B cell (primary cell): ENCODE measurements at regions of chr11 and their contacts with region 1.

Region 1: DNA sequence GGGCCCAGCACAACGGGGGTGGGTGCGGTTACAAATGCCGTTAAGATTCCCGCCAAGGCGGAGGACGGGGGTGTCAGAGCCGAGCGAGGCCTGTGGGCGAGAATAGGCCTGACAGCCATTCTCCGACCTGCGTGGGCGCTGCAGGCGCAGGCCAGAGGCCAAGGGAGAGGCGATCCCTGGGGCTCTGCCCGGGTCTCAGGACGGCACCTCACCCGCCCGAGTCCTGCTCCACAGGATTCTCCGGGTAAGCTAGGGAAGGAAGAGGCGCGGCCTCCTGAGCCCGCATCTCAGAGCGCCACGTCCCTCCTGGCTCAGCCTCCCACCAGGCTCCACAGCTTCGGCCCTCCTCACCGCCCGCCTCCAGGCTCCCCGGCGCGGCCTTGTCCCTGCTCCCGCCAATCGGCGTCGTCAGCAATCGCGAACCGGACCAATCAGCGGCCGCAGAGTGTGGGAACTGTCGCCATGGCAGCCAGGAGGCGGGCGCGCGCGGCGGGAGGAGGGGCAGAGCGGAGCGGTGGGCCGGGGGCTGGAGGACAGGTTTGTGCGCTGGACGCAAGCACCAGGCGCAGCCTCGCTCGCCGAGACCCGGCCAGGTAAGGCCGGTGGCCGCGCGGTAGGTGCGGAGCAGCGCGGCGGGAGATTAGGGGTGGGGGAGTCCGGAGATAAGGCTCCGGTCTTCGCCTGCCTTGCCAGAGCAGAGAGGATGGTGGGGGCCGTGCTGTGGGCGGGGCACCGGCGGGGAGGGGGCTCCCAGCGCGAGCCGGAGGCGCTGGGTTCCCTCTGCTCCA is at the start of gene NUCB2:
- DNase-seq: peak; percentile 95
- ATAC-seq: peak; percentile 97
- H3K4me3 ChIP-seq: peak within 1 kb of the TSS; percentile 50 to 89 (median 78)
- H3K4me3 Mint-ChIP-seq: peak within 1 kb of the TSS; percentile 95
- H3K27ac ChIP-seq: peak within 1 kb of the TSS; percentile 56 to 64
- H3K27ac Mint-ChIP-seq: peak within 1 kb of the TSS; percentile 89
- H3K4me1 ChIP-seq: peaks cover 8 to 14% of the 10 kb centered on the region in 2 donors
- H3K4me1 Mint-ChIP-seq: peaks cover 20% of the 10 kb centered on the region
- H3K27me3 ChIP-seq: no peaks in the 10 kb centered on the region
- H3K27me3 Mint-ChIP-seq: no peaks in the 10 kb centered on the region
- CTCF ChIP-seq: no peak
- total RNA-seq, gene NUCB2: 6.8 and 10.5 TPM in 2 replicates

Region 2: GRCh38 chr11:16738193-16738946 is 538.1 kb before region 1 on chr11 and contains the start of gene C11orf58:
- CTCF ChIA-PET with region 1: no interaction called
- POLR2A ChIA-PET with region 1: no interaction called
- intact Hi-C with region 1: loop called (anchors 2 kb)
- DNase-seq: peak; percentile 98
- ATAC-seq: peak; percentile 97
- H3K4me3 ChIP-seq: peak within 1 kb of the TSS; percentile 86 to 97 (median 95)
- H3K4me3 Mint-ChIP-seq: peak within 1 kb of the TSS; percentile 73
- H3K27ac ChIP-seq: peak within 1 kb of the TSS; percentile 98 to 99
- H3K27ac Mint-ChIP-seq: peak within 1 kb of the TSS; percentile 66
- H3K4me1 ChIP-seq: peaks cover 25 to 28% of the 10 kb centered on the region in 2 donors
- H3K4me1 Mint-ChIP-seq: peaks cover 20% of the 10 kb centered on the region
- H3K27me3 ChIP-seq: no peaks in the 10 kb centered on the region
- H3K27me3 Mint-ChIP-seq: no peaks in the 10 kb centered on the region
- CTCF ChIP-seq: no peak
- total RNA-seq, gene C11orf58: 125 and 129 TPM in 2 replicates

Region 3: GRCh38 chr11:17207317-17208258 is 68.8 kb before region 1 on chr11 and contains the start of gene PIK3C2A:
- CTCF ChIA-PET with region 1: interaction called, 5 read pairs
- POLR2A ChIA-PET with region 1: no interaction called
- intact Hi-C with region 1: loop called (anchors 1 kb)
- DNase-seq: peak; percentile 95
- ATAC-seq: peak; percentile 96
- H3K4me3 ChIP-seq: peak within 1 kb of the TSS; percentile 82 to 99 (median 96)
- H3K4me3 Mint-ChIP-seq: peak within 1 kb of the TSS; percentile 98
- H3K27ac ChIP-seq: peak within 1 kb of the TSS; percentile 96 to 98
- H3K27ac Mint-ChIP-seq: peak within 1 kb of the TSS; percentile 94
- H3K4me1 ChIP-seq: peaks cover 22 to 29% of the 10 kb centered on the region in 2 donors
- H3K4me1 Mint-ChIP-seq: peaks cover 38% of the 10 kb centered on the region
- H3K27me3 ChIP-seq: no peaks in the 10 kb centered on the region
- H3K27me3 Mint-ChIP-seq: no peaks in the 10 kb centered on the region
- CTCF ChIP-seq: no peak
- total RNA-seq, gene PIK3C2A: 48.8 and 54.9 TPM in 2 replicates

Region 4: GRCh38 chr11:17230867-17231851 is 45.3 kb before region 1 on chr11:
- CTCF ChIA-PET with region 1: interaction called, 5 read pairs
- POLR2A ChIA-PET with region 1: no interaction called
- intact Hi-C with region 1: loop called (anchors 1 kb)
- DNase-seq: peak; percentile 45
- ATAC-seq: peak; percentile 66
- H3K4me3 ChIP-seq: no peak overlapping the region
- H3K4me3 Mint-ChIP-seq: peak overlapping the region; percentile 30
- H3K27ac ChIP-seq: no peak overlapping the region
- H3K27ac Mint-ChIP-seq: no peak overlapping the region
- H3K4me1 ChIP-seq: peaks cover 4 to 17% of the 10 kb centered on the region in 2 donors
- H3K4me1 Mint-ChIP-seq: peaks cover 11% of the 10 kb centered on the region
- H3K27me3 ChIP-seq: no peaks in the 10 kb centered on the region
- H3K27me3 Mint-ChIP-seq: no peaks in the 10 kb centered on the region
- CTCF ChIP-seq: no peak

Region 5: GRCh38 chr11:17260020-17260419 is 16.4 kb before region 1 on chr11:
- CTCF ChIA-PET with region 1: no interaction called
- POLR2A ChIA-PET with region 1: no interaction called
- intact Hi-C with region 1: no loop called
- DNase-seq: no peak
- ATAC-seq: no peak
- H3K4me3 ChIP-seq: no peak overlapping the region
- H3K4me3 Mint-ChIP-seq: no peak overlapping the region
- H3K27ac ChIP-seq: no peak overlapping the region
- H3K27ac Mint-ChIP-seq: no peak overlapping the region
- H3K4me1 ChIP-seq: no peaks in the 10 kb centered on the region
- H3K4me1 Mint-ChIP-seq: no peaks in the 10 kb centered on the region
- H3K27me3 ChIP-seq: peaks cover 0 to 2% (median 0%) of the 10 kb centered on the region in 4 experiments
- H3K27me3 Mint-ChIP-seq: peaks cover 14% of the 10 kb centered on the region
- CTCF ChIP-seq: no peak

Region 6: GRCh38 chr11:17354601-17354991 is 78.2 kb after region 1 on chr11:
- CTCF ChIA-PET with region 1: interaction called, 7 read pairs
- POLR2A ChIA-PET with region 1: no interaction called
- intact Hi-C with region 1: loop called (anchors 2 kb)
- DNase-seq: peak; percentile 80
- ATAC-seq: no peak
- H3K4me3 ChIP-seq: no peak overlapping the region
- H3K4me3 Mint-ChIP-seq: peak overlapping the region; percentile 95
- H3K27ac ChIP-seq: no peak overlapping the region
- H3K27ac Mint-ChIP-seq: no peak overlapping the region
- H3K4me1 ChIP-seq: peaks cover 29 to 34% of the 10 kb centered on the region in 2 donors
- H3K4me1 Mint-ChIP-seq: peaks cover 32% of the 10 kb centered on the region
- H3K27me3 ChIP-seq: peaks cover 0 to 34% (median 21%) of the 10 kb centered on the region in 4 experiments
- H3K27me3 Mint-ChIP-seq: peaks cover 33% of the 10 kb centered on the region
- CTCF ChIP-seq: peak; percentile 82

Region 7: DNA sequence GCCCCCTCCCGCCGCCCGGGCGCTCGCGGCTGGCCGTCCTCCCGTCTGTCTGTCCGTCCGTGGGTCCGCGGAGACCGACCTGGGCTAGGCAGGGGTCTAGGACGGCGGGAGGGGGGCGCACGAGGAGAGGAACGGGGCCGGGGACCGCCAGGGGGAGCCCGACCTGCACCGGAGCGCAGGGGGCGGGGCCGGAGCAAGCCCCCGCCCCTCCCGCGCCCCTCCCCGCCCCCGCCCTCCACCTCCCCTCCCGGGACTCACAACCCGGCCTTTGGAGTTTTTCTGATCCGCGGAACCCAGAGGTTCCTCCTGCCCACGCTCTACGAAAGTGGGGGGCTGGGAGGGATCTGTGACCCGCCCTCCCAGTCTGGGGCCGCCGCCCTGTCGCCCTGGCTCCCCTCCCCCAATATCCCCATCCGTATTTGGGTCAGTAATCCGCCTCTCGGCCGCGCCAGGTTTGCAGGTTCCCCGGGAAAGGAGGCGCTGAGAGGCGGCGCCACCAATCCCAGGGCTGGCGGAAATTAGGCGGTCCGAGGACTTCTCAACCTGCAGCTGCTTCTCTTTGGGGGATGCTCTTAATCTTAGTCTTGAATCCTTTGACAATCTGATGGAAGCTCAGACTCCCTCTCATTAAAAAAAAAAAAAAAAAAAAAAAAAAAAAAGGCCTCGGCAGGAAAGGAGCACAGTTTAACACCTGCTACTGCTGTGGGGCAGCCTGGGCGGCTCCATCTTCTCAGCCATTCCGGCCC is 113.0 kb after region 1 on chr11:
- CTCF ChIA-PET with region 1: interaction called, 4 read pairs
- POLR2A ChIA-PET with region 1: no interaction called
- intact Hi-C with region 1: loop called (anchors 1 kb)
- DNase-seq: peak; percentile 88
- ATAC-seq: peak; percentile 94
- H3K4me3 ChIP-seq: peak overlapping the region; percentile 16 to 90 (median 63)
- H3K4me3 Mint-ChIP-seq: peak overlapping the region; percentile 85
- H3K27ac ChIP-seq: peak overlapping the region in 1 of 2 donors; percentile 29
- H3K27ac Mint-ChIP-seq: peak overlapping the region; percentile 59
- H3K4me1 ChIP-seq: peaks cover 4 to 33% of the 10 kb centered on the region in 2 donors
- H3K4me1 Mint-ChIP-seq: peaks cover 16% of the 10 kb centered on the region
- H3K27me3 ChIP-seq: peaks cover 0 to 2% (median 0%) of the 10 kb centered on the region in 4 experiments
- H3K27me3 Mint-ChIP-seq: peaks cover 5% of the 10 kb centered on the region
- CTCF ChIP-seq: peak; percentile 82